ENCODE measurements at regions of chr3 and their contacts with region 1.

Region 1: GRCh38 chr3:113514265-113514769 is 639 bp downstream of the SPICE1 start:
- DNase-seq: no peak
- H3K4me3 ChIP-seq: peak overlapping the region; percentile 87
- H3K27ac ChIP-seq: peak overlapping the region; percentile 64
- H3K4me1 ChIP-seq: peaks cover 17% of the 10 kb centered on the region; the same call in 1 of the 2 replicates
- H3K27me3 ChIP-seq: no peaks in the 10 kb centered on the region
- CTCF ChIP-seq: no peak

Region 2: GRCh38 chr3:112379020-112379690 is 1135.2 kb before region 1 on chr3:
- CTCF ChIA-PET with region 1: no interaction called
- POLR2A ChIA-PET with region 1: interaction called, 12 read pairs
- intact Hi-C with region 1: no loop called
- DNase-seq: no peak
- H3K4me3 ChIP-seq: no peak overlapping the region
- H3K27ac ChIP-seq: no peak overlapping the region
- H3K4me1 ChIP-seq: no peaks in the 10 kb centered on the region
- H3K27me3 ChIP-seq: no peaks in the 10 kb centered on the region
- CTCF ChIP-seq: no peak

Region 3: GRCh38 chr3:112582244-112582874 is 932.0 kb before region 1 on chr3:
- CTCF ChIA-PET with region 1: no interaction called
- POLR2A ChIA-PET with region 1: no interaction called
- intact Hi-C with region 1: no loop called
- DNase-seq: peak; percentile 47 to 55
- H3K4me3 ChIP-seq: no peak overlapping the region
- H3K27ac ChIP-seq: no peak overlapping the region
- H3K4me1 ChIP-seq: no peaks in the 10 kb centered on the region
- H3K27me3 ChIP-seq: no peaks in the 10 kb centered on the region
- CTCF ChIP-seq: peak; percentile 83

Region 4: GRCh38 chr3:112610121-112610520 is 904.2 kb before region 1 on chr3:
- CTCF ChIA-PET with region 1: no interaction called
- POLR2A ChIA-PET with region 1: interaction called, 13 read pairs
- intact Hi-C with region 1: no loop called
- DNase-seq: no peak
- H3K4me3 ChIP-seq: no peak overlapping the region
- H3K27ac ChIP-seq: no peak overlapping the region
- H3K4me1 ChIP-seq: peaks cover 1% of the 10 kb centered on the region; the same call in 1 of the 2 replicates
- H3K27me3 ChIP-seq: no peaks in the 10 kb centered on the region
- CTCF ChIP-seq: no peak

Region 5: GRCh38 chr3:113097960-113098447 is 416.3 kb before region 1 on chr3:
- CTCF ChIA-PET with region 1: interaction called, 10 read pairs
- POLR2A ChIA-PET with region 1: no interaction called
- intact Hi-C with region 1: no loop called
- DNase-seq: peak; percentile 57 to 81
- H3K4me3 ChIP-seq: no peak overlapping the region
- H3K27ac ChIP-seq: peak overlapping the region; percentile 49
- H3K4me1 ChIP-seq: peaks cover 19% of the 10 kb centered on the region
- H3K27me3 ChIP-seq: no peaks in the 10 kb centered on the region
- CTCF ChIP-seq: no peak

Region 6: DNA sequence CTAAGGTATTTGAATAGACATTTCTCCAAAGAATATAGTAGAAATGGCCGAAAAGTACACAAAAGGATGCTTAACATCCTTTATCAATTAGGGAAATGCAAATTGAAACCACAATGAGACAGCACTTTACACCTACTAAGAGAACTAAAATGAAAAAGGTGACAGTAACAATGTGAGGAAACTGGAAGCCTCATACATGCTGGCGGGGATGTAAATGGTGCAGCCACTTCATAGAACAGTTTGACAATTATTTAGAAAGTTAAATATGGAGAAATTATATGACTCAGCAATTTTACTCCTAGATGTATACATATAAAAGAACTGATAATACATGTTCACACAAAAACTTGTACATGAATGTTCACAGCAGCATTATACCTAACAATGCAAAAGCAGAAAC is 12.7 kb before region 1 on chr3:
- CTCF ChIA-PET with region 1: interaction called, 7 read pairs
- POLR2A ChIA-PET with region 1: interaction called, 12 read pairs
- intact Hi-C with region 1: loop called (anchors 2 kb)
- DNase-seq: no peak
- H3K4me3 ChIP-seq: no peak overlapping the region
- H3K27ac ChIP-seq: no peak overlapping the region
- H3K4me1 ChIP-seq: peaks cover 7% of the 10 kb centered on the region
- H3K27me3 ChIP-seq: no peaks in the 10 kb centered on the region
- CTCF ChIP-seq: no peak

Region 7: GRCh38 chr3:113531826-113532697 is 17.7 kb after region 1 on chr3 and contains the start of gene SIDT1:
- CTCF ChIA-PET with region 1: interaction called, 4 read pairs
- POLR2A ChIA-PET with region 1: no interaction called
- intact Hi-C with region 1: loop called (anchors 1 kb)
- DNase-seq: peak; percentile 54 to 55
- H3K4me3 ChIP-seq: peak within 1 kb of the TSS; percentile 64
- H3K27ac ChIP-seq: peak within 1 kb of the TSS; percentile 33
- H3K4me1 ChIP-seq: peaks cover 32% of the 10 kb centered on the region
- H3K27me3 ChIP-seq: no peaks in the 10 kb centered on the region
- CTCF ChIP-seq: no peak
- total RNA-seq, gene SIDT1: 1.2 and 3.3 TPM in 2 replicates

Region 8: GRCh38 chr3:113552851-113553250 is 38.5 kb after region 1 on chr3:
- CTCF ChIA-PET with region 1: no interaction called
- POLR2A ChIA-PET with region 1: no interaction called
- intact Hi-C with region 1: no loop called
- DNase-seq: no peak
- H3K4me3 ChIP-seq: no peak overlapping the region
- H3K27ac ChIP-seq: no peak overlapping the region
- H3K4me1 ChIP-seq: peaks cover 24% of the 10 kb centered on the region
- H3K27me3 ChIP-seq: no peaks in the 10 kb centered on the region
- CTCF ChIP-seq: no peak

Region 9: DNA sequence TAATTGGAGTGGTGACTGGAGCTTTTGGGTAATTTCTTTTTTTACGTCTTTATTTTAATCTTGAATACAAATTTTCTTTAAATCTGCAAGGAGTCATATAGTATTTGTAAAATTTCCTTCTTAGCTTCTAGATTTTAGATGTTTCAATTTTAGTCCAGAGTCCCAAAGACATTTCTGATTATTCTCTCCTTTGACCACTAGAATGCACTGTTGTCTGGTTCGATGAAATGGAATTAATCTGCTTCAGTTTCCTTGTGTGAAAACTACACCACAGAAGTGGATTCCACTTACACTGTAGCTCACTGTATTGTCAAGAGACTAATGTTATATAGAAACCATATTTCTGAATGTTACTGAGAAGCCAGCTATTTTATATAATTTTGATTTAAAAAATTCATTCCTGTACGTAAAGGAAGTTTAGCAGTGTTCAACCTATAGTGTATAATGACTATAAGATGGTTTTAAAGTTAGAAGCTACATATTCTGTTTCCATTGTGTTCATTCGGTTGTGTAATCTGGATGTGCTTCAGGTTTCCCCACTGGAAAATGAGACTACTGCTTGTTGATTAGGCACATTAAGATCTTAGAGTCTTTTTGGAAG is 330.4 kb after region 1 on chr3:
- CTCF ChIA-PET with region 1: no interaction called
- POLR2A ChIA-PET with region 1: interaction called, 11 read pairs
- intact Hi-C with region 1: no loop called
- DNase-seq: peak in 1 of 2 experiments; percentile 42
- H3K4me3 ChIP-seq: no peak overlapping the region
- H3K27ac ChIP-seq: no peak overlapping the region
- H3K4me1 ChIP-seq: peaks cover 23% of the 10 kb centered on the region
- H3K27me3 ChIP-seq: no peaks in the 10 kb centered on the region
- CTCF ChIP-seq: peak; percentile 68

Measured in PC-9 (cell line).